Activated CD4-positive, alpha-beta memory T cell treated with anti-CD3 and anti-CD28 coated beads for 36 hours (primary cell): ENCODE measurements at regions of chr1 and their contacts with region 1.

Region 1: GRCh38 chr1:37859507-37860345 is at the start of gene MTF1:
- DNase-seq: peak; percentile 98
- H3K4me3 Mint-ChIP-seq: peak within 1 kb of the TSS; percentile 96
- H3K27ac Mint-ChIP-seq: peak within 1 kb of the TSS; percentile 93
- H3K4me1 Mint-ChIP-seq: peaks cover 36% of the 10 kb centered on the region
- H3K27me3 Mint-ChIP-seq: no peaks in the 10 kb centered on the region
- total RNA-seq, gene MTF1: 21.1 to 22.8 TPM

Region 2: GRCh38 chr1:37807555-37808368 is 52.0 kb before region 1 on chr1 and contains the starts of genes C1orf122 and YRDC:
- CTCF ChIA-PET with region 1: interaction called, 32 read pairs
- POLR2A ChIA-PET with region 1: interaction called, 19 read pairs
- intact Hi-C with region 1: loop called (anchors 1 kb)
- DNase-seq: peak; percentile 95
- H3K4me3 Mint-ChIP-seq: peak within 1 kb of the TSS; percentile 95
- H3K27ac Mint-ChIP-seq: peak within 1 kb of the TSS; percentile 96
- H3K4me1 Mint-ChIP-seq: peaks cover 40% of the 10 kb centered on the region
- H3K27me3 Mint-ChIP-seq: no peaks in the 10 kb centered on the region
- total RNA-seq, gene C1orf122: 18.1 to 19.7 TPM
- total RNA-seq, gene YRDC: 34.1 to 36.1 TPM

Region 3: DNA sequence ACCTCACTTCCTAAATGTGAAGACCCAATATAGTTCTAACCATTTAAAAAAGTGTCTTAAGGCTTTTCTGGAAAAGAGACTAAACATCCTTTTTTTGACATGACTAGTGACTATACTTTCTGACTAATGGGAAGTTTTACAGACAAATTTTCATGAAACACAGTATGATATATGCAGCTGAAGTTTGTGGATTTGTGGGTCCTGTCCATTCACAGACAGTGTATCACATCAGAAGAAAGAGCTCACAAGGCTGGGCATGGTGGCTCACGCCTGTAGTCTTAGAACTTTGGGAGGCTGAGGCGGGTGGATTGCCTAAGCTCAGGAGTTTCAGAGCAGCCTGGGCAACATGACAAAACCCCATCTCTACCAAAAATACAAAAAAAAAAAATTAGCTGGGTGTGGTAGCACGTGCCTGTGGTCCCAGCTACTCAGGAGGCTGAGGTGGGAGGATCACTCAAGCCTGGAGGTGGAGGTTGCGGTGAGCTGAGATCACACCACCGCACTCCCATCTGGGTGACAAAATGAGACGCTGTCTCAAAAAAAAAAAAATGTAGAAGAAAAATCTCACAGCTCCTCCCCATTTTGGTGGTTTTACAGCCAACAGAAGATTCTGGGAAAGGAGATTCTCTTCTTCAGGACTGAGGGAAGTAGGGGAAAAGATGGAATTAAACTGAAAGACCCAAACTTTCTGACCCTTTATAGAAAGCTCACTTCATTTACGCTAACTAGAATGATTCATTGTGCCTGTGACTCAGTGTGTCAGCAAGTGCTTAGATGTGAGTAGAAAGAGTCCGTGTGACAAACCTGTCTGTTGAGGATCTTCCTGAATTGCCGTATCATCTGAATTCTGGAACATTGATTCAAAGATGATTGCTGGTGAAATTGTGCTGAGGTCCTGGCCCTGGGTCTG is 36.6 kb before region 1 on chr1:
- CTCF ChIA-PET with region 1: interaction called, 10 read pairs
- POLR2A ChIA-PET with region 1: interaction called, 3 read pairs
- intact Hi-C with region 1: no loop called
- DNase-seq: peak; percentile 39
- H3K4me3 Mint-ChIP-seq: no peak overlapping the region
- H3K27ac Mint-ChIP-seq: peak overlapping the region; percentile 70
- H3K4me1 Mint-ChIP-seq: peaks cover 22% of the 10 kb centered on the region
- H3K27me3 Mint-ChIP-seq: no peaks in the 10 kb centered on the region

Region 4: DNA sequence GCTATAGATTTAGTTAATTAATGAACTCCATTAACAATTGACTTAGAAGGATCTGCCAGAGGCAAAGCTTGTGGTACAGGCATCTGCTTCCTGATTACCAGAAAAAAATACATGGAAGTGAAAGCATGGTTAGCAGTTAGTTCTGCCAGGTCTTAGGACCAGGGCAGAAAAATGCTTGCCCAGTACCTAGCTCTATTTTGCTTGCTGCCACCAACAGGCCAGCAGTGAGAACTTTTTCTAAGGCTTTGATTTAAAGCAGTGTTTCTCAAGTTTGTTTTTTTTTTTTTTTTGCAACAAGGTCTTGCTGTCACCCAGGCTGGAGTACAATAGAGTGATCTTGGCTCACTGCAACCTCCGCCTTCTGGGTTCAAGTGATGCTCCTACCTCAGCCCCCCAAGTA is 16.1 kb after region 1 on chr1:
- CTCF ChIA-PET with region 1: interaction called, 12 read pairs
- POLR2A ChIA-PET with region 1: no interaction called
- intact Hi-C with region 1: no loop called
- DNase-seq: no peak
- H3K4me3 Mint-ChIP-seq: no peak overlapping the region
- H3K27ac Mint-ChIP-seq: no peak overlapping the region
- H3K4me1 Mint-ChIP-seq: peaks cover 4% of the 10 kb centered on the region
- H3K27me3 Mint-ChIP-seq: no peaks in the 10 kb centered on the region

Region 5: DNA sequence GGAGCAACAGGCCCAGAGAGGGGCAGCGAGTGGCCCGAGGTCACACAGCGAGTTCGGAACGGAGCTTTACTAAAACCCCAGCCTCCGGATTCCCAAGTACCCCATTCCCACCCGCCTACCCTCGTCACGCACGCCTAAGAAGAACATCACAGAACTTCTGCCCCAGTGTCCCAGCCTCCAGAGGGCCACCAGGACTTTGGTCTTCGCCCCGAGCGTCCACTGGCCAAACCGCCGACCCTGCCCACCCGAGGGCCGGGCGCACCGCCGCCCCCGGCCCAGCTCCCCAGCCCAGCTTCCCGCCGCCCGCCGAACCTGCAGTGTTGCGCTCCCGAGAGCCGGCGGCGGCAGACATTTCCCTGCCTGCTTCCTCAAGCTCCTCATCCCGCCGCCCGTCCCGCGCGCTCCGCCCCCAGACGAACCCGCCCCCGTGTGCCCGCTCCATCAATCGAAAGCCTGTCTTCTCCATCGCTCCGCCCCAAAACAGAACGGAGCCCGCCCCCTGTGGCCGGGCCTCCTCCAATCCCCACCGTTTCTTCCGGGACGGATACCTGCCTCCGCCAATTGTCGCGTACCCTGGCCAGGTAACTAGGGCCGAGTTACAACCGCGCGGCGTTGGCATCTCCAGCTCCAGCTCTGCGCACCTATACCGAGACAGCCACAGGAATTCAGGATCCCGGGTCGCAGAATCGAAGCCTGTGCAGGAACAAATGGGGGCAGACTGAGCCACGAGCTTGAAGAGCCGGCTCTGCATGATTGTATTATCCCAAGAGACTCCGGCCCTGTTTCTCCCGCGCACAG is 71.8 kb after region 1 on chr1:
- CTCF ChIA-PET with region 1: interaction called, 9 read pairs
- POLR2A ChIA-PET with region 1: interaction called, 3 read pairs
- intact Hi-C with region 1: loop called (anchors 10 kb)
- DNase-seq: peak; percentile 99
- H3K4me3 Mint-ChIP-seq: peak overlapping the region; percentile 91
- H3K27ac Mint-ChIP-seq: peak overlapping the region; percentile 68
- H3K4me1 Mint-ChIP-seq: peaks cover 33% of the 10 kb centered on the region
- H3K27me3 Mint-ChIP-seq: no peaks in the 10 kb centered on the region